Activated CD8-positive, alpha-beta T cell treated with anti-CD3 and anti-CD28 coated beads, Interleukin-2, amount 10 ng/mL, durations not matched to agents 7 days and 5 days (primary cell): ENCODE measurements at regions of chr4 and their contacts with region 1.

Region 1: GRCh38 chr4:10157478-10158332 is 41.1 kb upstream of the WDR1 start:
- DNase-seq: peak; percentile 59
- ATAC-seq: peak; percentile 40
- H3K4me3 Mint-ChIP-seq: no peak overlapping the region
- H3K27ac Mint-ChIP-seq: no peak overlapping the region
- H3K4me1 Mint-ChIP-seq: peaks cover 38% of the 10 kb centered on the region
- H3K27me3 Mint-ChIP-seq: peaks cover 7% of the 10 kb centered on the region

Region 2: DNA sequence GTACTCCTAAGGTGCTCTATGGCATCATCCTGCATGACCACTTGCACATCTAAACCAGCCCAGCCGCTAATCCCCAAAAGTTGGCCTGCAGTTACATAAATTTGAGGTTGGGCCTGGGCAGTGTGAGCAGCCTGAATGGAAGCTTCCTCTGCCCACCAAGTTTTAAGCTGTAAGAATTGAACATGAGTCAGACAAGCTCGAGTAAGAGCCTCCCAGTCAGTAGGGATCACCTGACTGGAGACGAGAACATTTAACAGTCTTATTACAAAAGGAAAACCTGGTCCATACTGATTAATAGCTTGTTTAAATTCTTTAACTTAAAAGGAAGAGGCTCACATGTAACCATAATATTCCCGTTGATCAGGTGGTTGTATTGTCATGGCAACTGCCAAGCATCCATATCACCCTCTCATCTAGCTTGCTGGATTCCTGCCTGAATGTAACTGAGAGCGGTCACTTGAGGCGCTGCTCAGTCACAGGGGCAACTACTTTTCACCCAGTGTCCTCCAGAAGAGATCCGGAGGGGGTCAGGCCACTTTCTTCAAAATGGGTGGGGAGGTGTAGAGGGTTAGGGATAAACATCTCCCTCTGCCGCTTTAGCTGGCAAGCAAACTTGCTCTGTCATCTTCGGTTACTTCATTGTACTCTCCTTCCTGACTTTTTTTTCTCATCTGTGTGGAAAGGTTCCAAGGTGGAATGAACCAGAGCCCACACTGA is 15.5 kb after region 1 on chr4:
- CTCF ChIA-PET with region 1: interaction called, 17 read pairs
- POLR2A ChIA-PET with region 1: no interaction called
- DNase-seq: no peak
- ATAC-seq: no peak
- H3K4me3 Mint-ChIP-seq: no peak overlapping the region
- H3K27ac Mint-ChIP-seq: no peak overlapping the region
- H3K4me1 Mint-ChIP-seq: no peaks in the 10 kb centered on the region
- H3K27me3 Mint-ChIP-seq: peaks cover 12% of the 10 kb centered on the region

Region 3: DNA sequence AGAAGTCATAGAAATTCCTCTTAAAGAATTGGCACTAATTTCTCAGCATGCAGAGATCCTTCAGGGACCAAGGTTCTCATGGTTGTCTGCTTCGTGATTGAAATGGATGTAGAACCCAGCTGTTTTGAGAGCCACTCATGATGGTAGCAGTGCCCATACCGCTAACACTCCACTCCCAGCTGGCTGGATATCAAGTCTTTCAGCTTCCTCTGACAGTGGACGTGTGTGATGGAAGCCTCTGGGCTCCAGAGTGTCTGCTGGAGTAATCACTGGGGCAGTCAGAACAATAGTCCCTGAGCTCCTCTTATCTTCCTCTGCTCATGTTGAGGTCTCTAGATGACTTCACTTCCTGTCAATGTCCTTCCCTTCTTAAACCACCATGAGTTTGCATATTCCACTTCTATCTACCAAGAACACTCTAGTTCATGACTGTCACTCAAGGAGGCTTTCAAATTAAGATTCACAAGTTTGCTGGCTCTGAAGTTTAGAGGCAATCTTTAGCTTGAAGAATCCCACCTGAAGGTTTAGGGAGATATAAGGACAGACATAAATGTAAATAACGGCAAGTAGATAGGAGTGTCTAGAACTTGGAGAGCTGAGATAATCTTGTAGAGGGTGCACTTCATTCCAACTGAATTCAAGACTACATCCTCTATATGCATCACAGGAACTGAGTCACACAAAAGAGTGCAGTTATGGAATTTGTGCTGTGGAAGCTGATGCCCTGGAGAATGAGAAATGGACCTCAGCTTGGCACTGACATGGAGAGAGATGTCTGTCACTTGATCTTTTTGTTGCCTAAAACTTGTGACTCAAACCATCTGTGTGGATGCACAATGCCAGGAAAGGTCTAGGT is 23.4 kb after region 1 on chr4:
- CTCF ChIA-PET with region 1: interaction called, 43 read pairs
- POLR2A ChIA-PET with region 1: interaction called, 3 read pairs
- DNase-seq: peak; percentile 66
- ATAC-seq: peak; percentile 83
- H3K4me3 Mint-ChIP-seq: peak overlapping the region; percentile 6
- H3K27ac Mint-ChIP-seq: peak overlapping the region; percentile 93
- H3K4me1 Mint-ChIP-seq: peaks cover 51% of the 10 kb centered on the region
- H3K27me3 Mint-ChIP-seq: no peaks in the 10 kb centered on the region

Region 4: DNA sequence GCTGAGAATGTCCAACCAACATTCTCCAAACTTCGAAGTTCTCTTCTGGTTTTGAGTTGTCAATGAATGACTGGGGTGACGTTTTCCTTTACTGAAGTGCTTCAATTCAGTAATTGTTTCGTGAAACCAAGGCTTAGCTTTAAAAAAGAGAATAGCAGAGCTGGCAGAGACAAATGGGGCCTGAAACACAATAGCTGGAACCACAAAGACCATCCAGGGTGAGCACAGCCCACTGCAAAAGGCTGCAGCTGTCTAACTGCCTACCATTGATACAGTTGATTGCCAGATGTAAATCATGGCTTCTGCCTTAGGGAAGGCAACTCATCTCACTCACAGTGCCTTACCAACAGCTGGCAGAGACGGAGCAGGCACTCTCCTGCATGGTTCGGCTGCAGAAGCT is 378.2 kb after region 1 on chr4:
- CTCF ChIA-PET with region 1: interaction called, 51 read pairs
- POLR2A ChIA-PET with region 1: no interaction called
- DNase-seq: no peak
- ATAC-seq: no peak
- H3K4me3 Mint-ChIP-seq: no peak overlapping the region
- H3K27ac Mint-ChIP-seq: no peak overlapping the region
- H3K4me1 Mint-ChIP-seq: no peaks in the 10 kb centered on the region
- H3K27me3 Mint-ChIP-seq: peaks cover 14% of the 10 kb centered on the region

Region 5: DNA sequence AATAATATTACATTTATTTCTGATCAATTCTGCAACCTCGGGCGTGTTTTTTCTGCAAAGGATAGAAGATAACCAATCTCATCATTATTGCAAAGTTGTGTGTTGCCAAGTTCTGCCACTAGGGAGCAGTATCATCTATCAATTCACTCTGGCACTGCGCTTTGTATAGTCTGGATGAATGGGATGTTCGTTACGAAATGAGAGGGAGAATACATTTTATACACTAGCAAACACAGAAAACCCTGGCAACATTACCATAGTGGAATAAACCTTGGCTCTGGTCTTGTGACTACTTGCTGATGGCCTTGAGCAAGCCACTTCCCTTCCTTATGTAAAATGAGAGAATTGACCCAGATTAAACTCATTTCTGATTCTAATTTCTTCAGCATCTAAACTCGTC is 397.0 kb after region 1 on chr4:
- CTCF ChIA-PET with region 1: interaction called, 16 read pairs
- POLR2A ChIA-PET with region 1: no interaction called
- DNase-seq: peak; percentile 64
- ATAC-seq: peak; percentile 36
- H3K4me3 Mint-ChIP-seq: no peak overlapping the region
- H3K27ac Mint-ChIP-seq: no peak overlapping the region
- H3K4me1 Mint-ChIP-seq: no peaks in the 10 kb centered on the region
- H3K27me3 Mint-ChIP-seq: peaks cover 16% of the 10 kb centered on the region